ENCODE measurements at regions of chr1 and their contacts with region 1.

Region 1: DNA sequence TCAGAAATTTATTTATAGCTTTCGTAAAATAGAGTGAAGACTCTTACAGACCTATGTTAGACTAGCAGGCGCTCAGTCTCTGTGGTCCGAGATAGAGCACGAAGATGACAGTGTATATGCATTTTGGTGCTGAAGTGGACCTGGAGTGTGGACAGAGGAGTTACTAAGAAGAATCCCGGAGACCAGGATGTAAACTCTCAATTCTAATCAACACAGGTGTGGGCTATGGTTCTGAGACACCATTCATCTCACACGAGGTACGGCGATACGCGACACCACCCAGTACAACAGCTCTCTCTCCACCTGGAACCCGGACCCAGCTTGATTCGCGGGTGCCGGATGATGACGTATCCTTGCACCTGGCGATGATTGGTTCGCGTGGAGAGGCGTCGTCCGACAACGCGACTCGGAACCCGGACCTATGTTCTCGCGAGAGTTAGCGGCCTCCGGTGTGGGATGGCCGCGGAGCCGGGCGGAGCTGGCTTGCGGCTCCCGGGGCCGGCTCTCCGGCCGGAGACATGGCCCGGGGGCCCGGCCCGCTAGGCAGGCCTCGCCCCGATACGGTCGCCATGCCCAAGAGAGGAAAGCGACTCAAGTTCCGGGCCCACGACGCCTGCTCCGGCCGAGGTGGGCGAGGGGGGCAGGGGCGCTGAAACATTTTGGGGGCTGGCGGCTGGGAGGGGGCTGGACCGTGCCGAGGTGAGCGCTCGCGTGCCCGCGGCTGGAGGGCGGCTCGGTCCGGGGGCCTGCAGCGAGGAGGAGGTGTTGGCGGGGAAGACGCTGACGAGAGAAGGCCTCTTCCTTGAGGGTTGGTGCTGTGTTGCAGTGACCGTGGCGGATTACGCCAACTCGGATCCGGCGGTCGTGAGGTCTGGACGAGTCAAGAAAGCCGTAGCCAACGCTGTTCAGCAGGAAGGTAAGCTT is at the start of gene TMEM183A:
- DNase-seq: peak; percentile 95
- ATAC-seq: peak; percentile 94
- H3K4me3 ChIP-seq: peak within 1 kb of the TSS; percentile 92 to 98 (median 96)
- H3K27ac ChIP-seq: peak within 1 kb of the TSS; percentile 98
- H3K4me1 ChIP-seq: peaks cover 34% of the 10 kb centered on the region
- H3K27me3 ChIP-seq: no peaks in the 10 kb centered on the region; a peak in 1 of 5 replicates
- CTCF ChIP-seq: no peak
- EP300 ChIP-seq: no peak
- POLR2A ChIP-seq: peak; percentile 97 to 99
- RAD21 ChIP-seq: no peak
- total RNA-seq, gene TMEM183A: 82.0 and 85.4 TPM in 2 replicates

Region 2: GRCh38 chr1:202348509-202349205 is 658.6 kb before region 1 on chr1 and contains the start of gene PPP1R12B:
- CTCF ChIA-PET with region 1: no interaction called
- POLR2A ChIA-PET with region 1: no interaction called
- in situ Hi-C with region 1: no loop called
- intact Hi-C with region 1: loop called (anchors 10 kb)
- DNase-seq: peak; percentile 98
- ATAC-seq: peak; percentile 98
- H3K4me3 ChIP-seq: peak within 1 kb of the TSS; percentile 71 to 88 (median 84)
- H3K27ac ChIP-seq: peak within 1 kb of the TSS; percentile 87
- H3K4me1 ChIP-seq: peaks cover 54% of the 10 kb centered on the region
- H3K27me3 ChIP-seq: no peaks in the 10 kb centered on the region; a peak in 1 of 5 replicates
- CTCF ChIP-seq: 0 out of 2 replicates have a peak, but pooled peaks have one; percentile 2
- EP300 ChIP-seq: peak in 1 of 2 experiments; percentile 55; a peak in 2 of 4 replicates
- POLR2A ChIP-seq: peak; percentile 63 to 74
- RAD21 ChIP-seq: peak; percentile 27
- total RNA-seq, gene PPP1R12B: 5.0 and 12.0 TPM in 2 replicates

Region 3: DNA sequence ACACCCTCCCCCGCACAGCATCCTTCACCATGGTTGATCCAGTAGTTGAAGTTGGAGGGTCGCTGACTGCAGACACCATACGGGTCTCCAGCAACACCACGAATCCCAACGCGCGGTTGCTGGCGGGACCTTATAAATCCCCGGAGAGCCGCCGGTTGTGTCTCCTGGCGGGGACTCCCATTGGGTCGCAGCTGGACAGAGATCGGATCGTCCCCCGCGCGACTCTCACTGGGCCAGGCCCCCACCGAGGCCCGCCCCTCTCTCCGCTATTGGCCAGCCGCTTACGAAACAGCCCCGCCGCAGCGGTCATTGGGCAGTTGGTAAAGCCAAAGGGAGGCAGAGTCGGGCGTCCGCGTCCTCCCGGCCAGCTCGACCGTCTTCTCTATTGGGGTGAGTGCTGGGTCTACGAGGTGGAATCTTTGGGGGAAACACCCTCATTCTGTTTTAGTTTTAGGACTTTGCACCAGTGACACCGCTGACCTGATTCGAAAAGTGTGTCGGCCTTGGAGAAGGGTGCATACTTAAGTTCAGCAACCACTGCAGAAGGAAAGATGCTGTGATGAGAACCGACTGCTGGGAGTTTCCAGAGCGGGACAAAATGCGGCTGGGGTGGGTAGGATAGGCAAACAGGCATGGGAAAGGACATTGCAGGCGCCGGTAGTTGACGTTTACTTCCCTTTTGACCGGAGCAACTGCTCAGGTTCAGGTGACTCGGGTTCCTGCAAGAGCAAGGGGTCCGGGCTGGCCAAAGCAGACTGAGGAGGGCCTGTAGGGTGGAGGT is 145.6 kb before region 1 on chr1:
- CTCF ChIA-PET with region 1: no interaction called
- POLR2A ChIA-PET with region 1: interaction called, 14 read pairs
- in situ Hi-C with region 1: no loop called
- intact Hi-C with region 1: no loop called
- DNase-seq: peak; percentile 90
- ATAC-seq: peak; percentile 90
- H3K4me3 ChIP-seq: peak overlapping the region; percentile 79 to 91 (median 83)
- H3K27ac ChIP-seq: peak overlapping the region; percentile 95
- H3K4me1 ChIP-seq: peaks cover 61% of the 10 kb centered on the region
- H3K27me3 ChIP-seq: no peaks in the 10 kb centered on the region; a peak in 1 of 5 replicates
- CTCF ChIP-seq: no peak
- EP300 ChIP-seq: no peak
- POLR2A ChIP-seq: peak; percentile 80 to 95; a peak in 3 of 4 replicates
- RAD21 ChIP-seq: 0 out of 2 replicates have a peak, but pooled peaks have one; percentile 6

Region 4: DNA sequence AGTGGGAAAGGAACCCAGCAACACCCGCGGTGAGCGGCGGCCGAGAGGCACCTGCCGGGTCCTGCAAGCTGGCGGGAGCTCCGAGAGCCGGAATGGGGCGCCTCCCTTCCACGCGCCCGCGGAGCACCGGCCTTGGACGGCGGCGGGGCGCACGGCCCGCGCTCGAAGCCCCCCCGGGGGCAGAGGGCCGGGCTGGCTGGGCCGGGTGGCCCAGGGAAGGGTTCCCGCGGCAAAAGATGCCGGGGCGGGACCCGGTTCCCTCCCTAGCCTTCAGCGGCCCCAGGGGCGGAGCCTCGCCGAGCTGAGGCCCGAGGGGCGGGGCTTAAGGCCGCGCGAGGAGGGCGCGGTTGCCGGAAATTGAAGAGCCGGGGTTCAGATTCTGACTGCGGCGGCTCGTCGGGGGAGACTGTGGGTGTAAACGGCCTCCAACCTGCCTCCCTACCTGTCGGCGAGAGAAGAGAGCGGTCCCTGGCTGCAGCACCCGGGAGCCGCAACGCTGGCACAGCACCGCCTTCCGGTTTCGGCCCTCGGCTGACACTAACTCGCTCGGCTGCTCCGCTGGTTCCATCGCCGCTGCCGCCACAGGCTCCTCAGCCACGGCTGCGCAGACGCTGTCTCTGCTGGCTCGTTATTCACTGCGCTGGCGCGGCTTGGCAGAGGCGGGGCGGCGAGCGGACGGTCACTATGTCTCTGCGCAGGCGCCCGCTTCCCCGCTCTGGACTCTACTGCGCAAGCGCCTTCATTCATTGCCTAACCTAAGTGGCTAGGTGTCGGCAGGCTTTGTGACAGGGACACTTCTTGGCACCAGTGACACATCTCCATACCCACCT is 118.5 kb before region 1 on chr1 and contains the start of gene RABIF:
- CTCF ChIA-PET with region 1: no interaction called
- POLR2A ChIA-PET with region 1: interaction called, 12 read pairs
- in situ Hi-C with region 1: no loop called
- intact Hi-C with region 1: no loop called
- DNase-seq: peak; percentile 93
- ATAC-seq: peak; percentile 97
- H3K4me3 ChIP-seq: peak within 1 kb of the TSS; percentile 78 to 93 (median 89)
- H3K27ac ChIP-seq: peak within 1 kb of the TSS; percentile 95
- H3K4me1 ChIP-seq: peaks cover 15% of the 10 kb centered on the region
- H3K27me3 ChIP-seq: no peaks in the 10 kb centered on the region
- CTCF ChIP-seq: peak; percentile 48
- EP300 ChIP-seq: no peak
- POLR2A ChIP-seq: peak; percentile 95 to 96
- RAD21 ChIP-seq: peak; percentile 33
- total RNA-seq, gene RABIF: 8.3 and 11.1 TPM in 2 replicates

Region 5: DNA sequence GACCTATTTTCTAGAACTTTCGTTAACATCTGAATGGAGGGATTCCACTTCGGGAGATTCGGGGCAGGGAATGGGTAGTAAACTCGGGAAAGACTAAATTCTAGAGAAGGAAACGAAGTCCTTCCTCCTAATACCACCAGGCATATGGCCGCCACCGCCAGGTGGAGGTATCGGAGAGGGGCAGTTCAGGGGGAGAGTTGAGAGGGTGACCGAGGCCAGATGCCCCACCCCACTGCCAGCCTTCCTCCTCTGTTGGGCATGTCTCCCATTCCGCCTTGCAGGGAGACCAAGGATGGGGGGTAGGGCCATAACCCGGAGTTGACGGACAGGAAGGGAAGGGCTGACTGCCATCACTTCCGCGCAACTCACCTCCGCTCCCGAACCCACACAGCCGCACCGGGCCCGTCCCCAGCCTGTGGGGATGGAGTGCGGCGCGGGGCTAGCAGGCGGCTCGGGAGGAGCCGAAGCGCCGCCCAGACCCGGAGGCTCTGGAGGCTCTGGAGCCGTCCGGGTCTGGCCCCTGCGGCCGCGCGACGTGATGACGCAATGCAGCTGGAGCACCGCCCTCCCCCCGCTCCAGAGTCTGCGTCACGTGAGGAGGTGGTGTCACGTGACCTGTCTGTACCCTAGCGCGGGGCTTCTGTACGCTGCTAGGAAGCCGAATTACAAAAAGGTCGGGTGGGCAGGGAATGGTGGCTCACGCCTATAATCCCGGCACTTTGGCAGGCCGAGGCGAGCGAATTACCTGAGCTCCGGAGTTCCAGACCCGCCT is 80.3 kb before region 1 on chr1 and contains the start of gene KLHL12:
- CTCF ChIA-PET with region 1: no interaction called
- POLR2A ChIA-PET with region 1: interaction called, 13 read pairs
- in situ Hi-C with region 1: no loop called
- intact Hi-C with region 1: no loop called
- DNase-seq: peak; percentile 92
- ATAC-seq: peak; percentile 100
- H3K4me3 ChIP-seq: peak within 1 kb of the TSS; percentile 69 to 85 (median 81)
- H3K27ac ChIP-seq: peak within 1 kb of the TSS; percentile 83
- H3K4me1 ChIP-seq: peaks cover 16% of the 10 kb centered on the region
- H3K27me3 ChIP-seq: no peaks in the 10 kb centered on the region; a peak in 1 of 5 replicates
- CTCF ChIP-seq: peak; percentile 78
- EP300 ChIP-seq: peak in 1 of 2 experiments; percentile 58; a peak in 1 of 4 replicates
- POLR2A ChIP-seq: peak; percentile 84 to 96
- RAD21 ChIP-seq: peak; percentile 69; the same call in 1 of the 2 replicates
- total RNA-seq, gene KLHL12: 25.2 and 34.2 TPM in 2 replicates

Region 6: DNA sequence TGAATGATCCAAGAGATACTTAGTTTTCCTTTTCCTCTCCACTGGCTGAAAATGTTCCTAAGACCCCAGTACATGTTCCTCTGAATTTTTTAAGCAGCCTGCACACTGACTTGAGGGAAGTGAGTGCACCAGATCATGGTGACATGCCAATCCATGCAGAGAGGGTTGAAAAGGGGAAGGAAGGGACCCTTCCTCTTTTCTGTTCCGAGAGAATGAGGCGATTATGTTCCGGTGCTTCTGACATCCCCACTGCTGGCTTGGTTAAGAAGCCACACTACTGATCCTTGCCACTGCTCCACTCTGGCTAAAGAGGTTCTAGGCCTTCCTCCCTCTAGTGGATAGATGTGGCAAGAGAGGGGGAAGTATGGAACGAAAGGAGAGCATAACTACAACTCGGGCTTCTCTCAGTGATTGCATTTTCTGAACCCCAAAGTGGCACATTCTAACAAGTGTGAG is 38.3 kb before region 1 on chr1:
- CTCF ChIA-PET with region 1: no interaction called
- POLR2A ChIA-PET with region 1: interaction called, 11 read pairs
- in situ Hi-C with region 1: no loop called
- intact Hi-C with region 1: no loop called
- DNase-seq: peak; percentile 78
- ATAC-seq: peak; percentile 89
- H3K4me3 ChIP-seq: peak overlapping the region; percentile 4 to 78 (median 65); a peak in 3 of 6 replicates
- H3K27ac ChIP-seq: no peak overlapping the region
- H3K4me1 ChIP-seq: peaks cover 25% of the 10 kb centered on the region
- H3K27me3 ChIP-seq: 0 out of 5 replicates have a peak, but pooled peaks cover 0 to 6% of the 10 kb centered on the region in 2 experiments
- CTCF ChIP-seq: peak; percentile 83
- EP300 ChIP-seq: no peak
- POLR2A ChIP-seq: no peak
- RAD21 ChIP-seq: peak; percentile 52

Region 7: DNA sequence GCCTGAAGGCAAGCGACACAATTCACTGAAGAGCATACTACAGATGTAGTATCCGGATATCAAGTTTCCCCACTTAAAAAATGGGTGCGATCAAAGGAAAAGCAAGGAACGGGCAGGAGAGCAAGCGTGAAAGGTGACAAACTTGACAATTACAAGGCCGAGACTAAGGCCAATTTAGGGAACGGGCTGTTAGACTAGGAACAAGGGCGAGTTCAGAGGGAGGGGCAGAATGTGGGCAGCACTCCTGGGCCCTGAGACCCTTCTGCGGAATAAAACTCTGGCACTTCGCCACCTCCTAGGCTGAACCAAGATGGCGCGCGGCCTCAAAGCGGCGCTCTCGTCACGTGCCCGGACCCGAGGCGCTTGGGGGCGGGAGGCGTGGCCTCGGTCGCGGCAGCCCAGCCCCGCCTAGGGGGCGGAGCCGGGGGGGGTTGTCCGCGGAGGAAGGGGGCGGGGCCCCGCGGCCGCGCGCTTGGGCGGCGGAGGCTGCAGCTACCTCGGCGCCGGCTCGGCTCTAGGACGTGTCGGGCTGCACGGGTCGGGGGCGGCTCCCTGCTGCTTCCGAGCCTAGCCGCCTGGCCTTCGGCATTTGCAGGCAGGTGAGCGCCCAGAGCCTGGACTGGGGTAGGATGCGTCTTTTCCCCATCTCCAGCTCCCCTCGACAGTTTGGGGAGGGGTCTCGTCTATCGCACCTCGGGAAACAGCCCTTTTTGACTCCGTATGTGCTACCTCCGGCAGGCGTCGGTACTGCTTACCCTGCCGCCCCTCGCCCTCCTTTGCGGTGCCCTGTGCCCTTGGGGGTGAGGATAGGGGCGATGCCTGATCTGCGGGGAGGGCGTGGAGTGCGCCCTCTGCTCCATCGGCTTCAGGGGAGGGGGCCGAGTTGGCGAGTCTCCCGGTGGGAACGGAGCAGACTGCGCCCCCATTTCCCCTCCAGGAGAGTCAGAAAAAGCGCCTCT is 19.1 kb after region 1 on chr1 and contains the start of gene PPFIA4:
- CTCF ChIA-PET with region 1: no interaction called
- POLR2A ChIA-PET with region 1: interaction called, 10 read pairs
- in situ Hi-C with region 1: no loop called
- intact Hi-C with region 1: no loop called
- DNase-seq: no peak
- ATAC-seq: peak; percentile 76
- H3K4me3 ChIP-seq: peak within 1 kb of the TSS; percentile 50 to 78 (median 69); a peak in 5 of 6 replicates
- H3K27ac ChIP-seq: no peak within 1 kb of the TSS
- H3K4me1 ChIP-seq: peaks cover 26% of the 10 kb centered on the region
- H3K27me3 ChIP-seq: peaks cover 5 to 14% of the 10 kb centered on the region in 2 experiments; a peak in 4 of 5 replicates
- CTCF ChIP-seq: peak; percentile 11; the same call in 1 of the 2 replicates
- EP300 ChIP-seq: no peak
- POLR2A ChIP-seq: peak in 1 of 2 experiments; percentile 64; a peak in 2 of 4 replicates
- RAD21 ChIP-seq: no peak; the same call in 1 of the 2 replicates
- total RNA-seq, gene PPFIA4: not detected in 2 replicates

Measured in HepG2 (cell line).